H1 (cell line): ENCODE measurements at regions of chr11 and their contacts with region 1.

Region 1: GRCh38 chr11:4496557-4497275 is 14.3 kb downstream of the OR52K1 start:
- DNase-seq: no peak
- H3K4me3 ChIP-seq: no peak overlapping the region
- H3K27ac ChIP-seq: no peak overlapping the region
- H3K4me1 ChIP-seq: no peaks in the 10 kb centered on the region
- H3K27me3 ChIP-seq: no peaks in the 10 kb centered on the region
- CTCF ChIP-seq: no peak
- EP300 ChIP-seq: no peak
- POLR2A ChIP-seq: no peak
- RAD21 ChIP-seq: no peak

Region 2: DNA sequence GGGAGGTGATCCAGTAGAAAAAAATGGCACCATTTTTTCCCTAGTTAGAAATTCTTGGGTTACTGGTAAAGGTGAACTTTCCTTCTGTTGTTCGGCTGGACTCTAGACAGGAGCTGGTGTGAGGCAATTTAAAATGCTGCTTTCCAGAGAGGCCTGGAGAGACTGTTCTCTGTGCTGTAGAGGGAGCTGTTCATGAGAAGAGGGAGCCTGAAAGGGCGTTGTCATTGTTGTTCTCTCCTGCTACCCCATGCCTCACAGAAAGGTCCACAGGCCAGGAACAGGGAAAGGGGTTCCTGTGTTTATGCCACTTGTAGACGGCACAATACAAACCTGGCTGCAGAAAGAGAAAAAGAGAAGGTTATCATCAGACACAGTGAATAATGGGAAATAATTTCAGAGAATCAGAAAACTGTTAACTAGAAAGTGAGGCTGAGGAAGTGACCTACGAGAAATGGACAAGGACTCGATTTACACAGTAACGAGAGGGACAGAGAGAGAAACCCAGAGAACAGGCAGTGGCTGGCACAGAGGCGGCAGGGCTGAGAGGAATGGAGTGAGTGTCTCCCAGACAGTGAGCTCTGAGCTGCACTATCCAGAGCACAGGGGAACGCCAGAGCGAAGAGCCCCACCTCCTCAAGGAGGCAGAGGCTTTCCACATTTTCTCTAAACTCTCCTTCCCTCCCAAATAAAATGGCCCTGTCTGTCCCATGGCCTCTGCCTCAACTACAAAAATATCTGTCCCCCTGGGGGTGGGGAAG is 292.9 kb before region 1 on chr11:
- CTCF ChIA-PET with region 1: interaction called, 18 read pairs
- POLR2A ChIA-PET with region 1: no interaction called
- DNase-seq: no peak
- H3K4me3 ChIP-seq: no peak overlapping the region
- H3K27ac ChIP-seq: no peak overlapping the region
- H3K4me1 ChIP-seq: no peaks in the 10 kb centered on the region
- H3K27me3 ChIP-seq: no peaks in the 10 kb centered on the region
- CTCF ChIP-seq: peak; percentile 16 to 67 (median 51)
- EP300 ChIP-seq: no peak
- POLR2A ChIP-seq: no peak
- RAD21 ChIP-seq: peak; percentile 51 to 62

Region 3: DNA sequence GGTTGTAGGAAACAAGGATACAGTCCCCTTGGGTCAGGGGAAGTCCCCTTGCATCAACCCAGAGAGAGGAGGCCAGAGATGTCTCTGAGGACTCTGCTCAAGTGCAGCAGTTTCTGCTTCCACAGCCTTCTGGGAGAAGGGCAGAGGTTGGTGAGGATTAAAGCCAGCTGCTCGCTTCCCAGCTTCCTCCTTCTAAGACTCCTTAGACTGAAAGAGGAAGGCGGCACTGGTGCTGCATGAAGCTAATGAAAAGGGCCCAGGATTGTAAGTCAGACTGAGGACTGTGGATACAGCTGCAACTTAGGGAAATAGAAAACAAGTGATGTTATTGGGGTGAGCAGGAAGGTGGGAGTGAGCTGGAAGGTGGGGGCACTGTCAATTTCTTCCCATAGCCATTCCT is 14.3 kb before region 1 on chr11 and contains the start of gene OR52K1:
- CTCF ChIA-PET with region 1: interaction called, 13 read pairs
- POLR2A ChIA-PET with region 1: no interaction called
- DNase-seq: no peak
- H3K4me3 ChIP-seq: no peak within 1 kb of the TSS
- H3K27ac ChIP-seq: no peak within 1 kb of the TSS
- H3K4me1 ChIP-seq: no peaks in the 10 kb centered on the region
- H3K27me3 ChIP-seq: no peaks in the 10 kb centered on the region
- CTCF ChIP-seq: no peak
- EP300 ChIP-seq: no peak
- POLR2A ChIP-seq: no peak
- RAD21 ChIP-seq: no peak
- total RNA-seq, gene OR52K1: not detected in 2 replicates